GM13977 (cell line): ENCODE measurements at regions of chr7 and their contacts with region 1.

Region 1: GRCh38 chr7:16078076-16078952 is 343.0 kb downstream of the CRPPA start:
- DNase-seq: peak; percentile 7
- CTCF ChIP-seq: peak; percentile 56

Region 2: DNA sequence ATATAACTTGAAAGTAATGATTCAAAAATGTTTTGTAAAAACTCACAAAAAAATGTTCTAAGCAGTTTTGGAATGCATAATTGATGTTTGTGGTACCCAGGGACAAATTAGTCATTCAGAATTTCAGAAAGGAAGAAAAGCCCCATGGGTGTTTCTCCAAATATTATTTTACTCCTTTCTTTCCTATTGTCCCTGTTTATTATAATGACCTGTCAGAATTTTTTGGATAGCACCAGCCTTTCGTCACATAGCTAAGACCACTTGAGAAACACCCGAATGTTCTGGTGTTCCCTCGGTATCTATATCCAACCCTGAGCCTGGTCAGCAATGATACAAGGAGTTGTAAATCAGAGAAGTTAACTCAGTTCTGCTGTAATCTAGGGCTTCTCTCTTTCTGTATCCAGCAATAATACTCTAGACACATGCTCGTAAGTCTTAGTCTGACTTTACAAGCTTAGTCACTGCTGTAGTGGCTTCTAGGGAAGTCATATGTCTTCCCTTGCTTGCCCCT is 327.1 kb before region 1 on chr7:
- in situ Hi-C with region 1: no loop called
- DNase-seq: no peak
- CTCF ChIP-seq: no peak

Region 3: DNA sequence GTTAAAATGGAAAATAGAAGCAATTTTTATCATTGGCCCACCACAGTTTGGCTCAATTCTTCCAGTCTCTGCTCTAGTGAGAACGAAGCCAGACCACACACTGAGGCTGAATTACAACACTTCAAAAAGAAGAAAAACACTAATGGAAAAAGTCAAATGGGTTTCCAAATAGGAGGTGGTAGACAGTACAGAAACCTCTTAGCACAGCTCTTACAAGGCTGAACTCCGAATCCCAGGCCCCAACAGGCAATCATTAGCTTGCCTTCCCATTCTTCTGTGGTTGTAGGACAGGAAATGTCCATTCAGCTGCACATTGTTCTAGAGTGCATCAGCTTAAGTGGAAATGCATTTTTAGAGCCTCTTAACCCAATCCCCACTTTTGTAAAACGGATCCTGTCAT is 276.8 kb before region 1 on chr7:
- in situ Hi-C with region 1: no loop called
- DNase-seq: no peak
- CTCF ChIP-seq: no peak

Region 4: GRCh38 chr7:16268821-16269768 is 190.8 kb after region 1 on chr7:
- in situ Hi-C with region 1: no loop called
- DNase-seq: no peak
- CTCF ChIP-seq: no peak

Region 5: DNA sequence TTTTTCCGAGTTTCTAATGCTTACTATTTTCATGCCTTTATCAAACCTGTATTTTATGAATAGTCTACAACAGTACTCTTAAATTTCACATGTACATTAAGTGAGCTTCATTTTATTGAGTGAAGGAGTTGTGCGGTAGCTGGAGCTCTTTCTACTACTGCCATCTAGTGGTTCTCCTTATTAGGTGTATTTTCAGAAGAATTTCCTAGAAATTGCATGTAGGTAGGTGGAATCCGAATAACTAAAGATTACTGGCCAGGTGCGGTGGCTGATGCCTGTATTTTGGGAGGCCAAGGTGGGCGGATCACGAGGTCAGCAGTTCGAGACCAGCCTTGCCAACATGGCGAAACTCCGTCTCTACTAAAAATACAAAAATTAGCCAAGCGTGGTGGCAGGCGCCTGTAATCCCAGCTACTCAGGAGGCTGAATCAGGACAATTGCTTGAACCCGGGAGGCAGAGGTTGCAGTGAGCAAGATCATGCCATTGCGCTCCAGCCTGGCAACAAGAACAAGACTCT is 486.7 kb after region 1 on chr7:
- in situ Hi-C with region 1: loop called (anchors 25 kb)
- DNase-seq: peak; percentile 53
- CTCF ChIP-seq: peak; percentile 67

Region 6: GRCh38 chr7:16774986-16775385 is 696.7 kb after region 1 on chr7:
- in situ Hi-C with region 1: no loop called
- DNase-seq: no peak
- CTCF ChIP-seq: no peak